ENCODE measurements at regions of chr7 and their contacts with region 1.

Region 1: DNA sequence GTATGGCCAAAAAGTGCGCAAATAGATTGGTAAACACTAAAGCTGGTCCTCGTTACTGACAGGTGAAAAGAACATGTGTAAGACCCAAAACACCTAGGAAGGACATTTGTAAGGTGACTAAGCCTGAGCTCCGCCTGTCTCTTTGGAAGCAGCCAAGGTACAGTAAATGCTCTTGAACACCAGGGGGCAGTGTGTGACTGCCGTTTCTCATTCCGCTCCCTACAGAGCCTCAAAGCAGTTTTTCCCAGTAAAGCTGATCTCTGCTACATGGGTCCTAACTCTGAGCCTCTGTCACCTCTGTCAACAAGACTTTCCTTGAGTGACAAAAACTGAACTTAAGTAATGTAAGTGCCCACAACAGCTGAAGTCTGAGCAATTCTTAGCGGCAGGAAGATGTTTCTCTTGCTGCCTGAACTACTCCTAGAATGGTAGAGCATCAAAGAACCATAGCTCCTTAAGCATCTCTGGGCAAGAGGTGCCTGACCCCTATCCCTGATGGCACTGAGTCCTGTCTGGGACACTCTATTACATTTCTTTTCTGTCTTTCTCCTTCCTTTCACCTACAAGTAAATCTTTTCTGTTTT is 238.0 kb upstream of the INHBA start:
- H3K4me3 ChIP-seq: no peak overlapping the region
- H3K27ac ChIP-seq: no peak overlapping the region
- H3K4me1 ChIP-seq: no peaks in the 10 kb centered on the region
- CTCF ChIP-seq: peak; percentile 43

Region 2: DNA sequence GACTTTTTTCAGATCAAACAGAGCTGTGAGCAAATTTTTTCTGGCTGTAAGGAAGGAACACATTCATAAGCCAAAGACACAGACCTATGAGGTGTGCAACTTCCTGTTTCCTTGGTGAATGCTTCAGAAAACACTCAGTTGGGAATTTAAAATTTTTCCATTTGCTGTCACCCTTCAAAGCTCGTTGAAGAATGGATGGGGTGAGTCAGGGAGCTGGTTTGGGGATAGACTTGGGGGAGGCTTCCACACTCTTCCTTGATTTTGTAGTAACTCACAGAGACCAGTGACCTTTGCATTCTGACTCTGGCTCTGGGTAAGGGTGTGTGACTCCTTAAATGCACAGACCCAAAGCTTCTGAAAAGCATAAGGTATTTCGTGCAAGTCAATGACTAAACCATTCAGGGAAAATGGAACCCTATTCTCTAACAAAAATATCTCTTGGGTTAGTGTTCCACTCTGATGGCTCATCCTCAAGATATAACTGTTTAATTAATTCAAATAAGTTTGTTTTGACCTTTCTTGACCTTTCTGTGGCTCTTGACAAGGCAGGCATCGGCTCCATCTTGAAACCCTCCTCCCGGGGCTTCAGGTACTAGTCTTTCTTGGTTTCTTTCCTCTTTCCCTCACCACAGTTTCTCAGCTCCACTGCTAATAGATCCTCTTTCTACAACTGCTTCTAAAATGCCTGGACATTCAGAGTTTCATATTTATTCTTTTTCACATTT is 10.2 kb before region 1 on chr7:
- CTCF ChIA-PET with region 1: interaction called, 16 read pairs
- POLR2A ChIA-PET with region 1: no interaction called
- H3K4me3 ChIP-seq: no peak overlapping the region
- H3K27ac ChIP-seq: no peak overlapping the region
- H3K4me1 ChIP-seq: no peaks in the 10 kb centered on the region
- CTCF ChIP-seq: no peak

Region 3: GRCh38 chr7:41977151-41977651 is 36.3 kb after region 1 on chr7:
- CTCF ChIA-PET with region 1: interaction called, 117 read pairs
- POLR2A ChIA-PET with region 1: no interaction called
- H3K4me3 ChIP-seq: no peak overlapping the region
- H3K27ac ChIP-seq: no peak overlapping the region
- H3K4me1 ChIP-seq: no peaks in the 10 kb centered on the region
- CTCF ChIP-seq: no peak

Region 4: GRCh38 chr7:42831718-42832431 is 891.0 kb after region 1 on chr7:
- CTCF ChIA-PET with region 1: interaction called, 19 read pairs
- POLR2A ChIA-PET with region 1: no interaction called
- H3K4me3 ChIP-seq: no peak overlapping the region
- H3K27ac ChIP-seq: no peak overlapping the region
- H3K4me1 ChIP-seq: no peaks in the 10 kb centered on the region; the same call in 1 of the 2 replicates
- CTCF ChIP-seq: peak; percentile 58

Region 5: DNA sequence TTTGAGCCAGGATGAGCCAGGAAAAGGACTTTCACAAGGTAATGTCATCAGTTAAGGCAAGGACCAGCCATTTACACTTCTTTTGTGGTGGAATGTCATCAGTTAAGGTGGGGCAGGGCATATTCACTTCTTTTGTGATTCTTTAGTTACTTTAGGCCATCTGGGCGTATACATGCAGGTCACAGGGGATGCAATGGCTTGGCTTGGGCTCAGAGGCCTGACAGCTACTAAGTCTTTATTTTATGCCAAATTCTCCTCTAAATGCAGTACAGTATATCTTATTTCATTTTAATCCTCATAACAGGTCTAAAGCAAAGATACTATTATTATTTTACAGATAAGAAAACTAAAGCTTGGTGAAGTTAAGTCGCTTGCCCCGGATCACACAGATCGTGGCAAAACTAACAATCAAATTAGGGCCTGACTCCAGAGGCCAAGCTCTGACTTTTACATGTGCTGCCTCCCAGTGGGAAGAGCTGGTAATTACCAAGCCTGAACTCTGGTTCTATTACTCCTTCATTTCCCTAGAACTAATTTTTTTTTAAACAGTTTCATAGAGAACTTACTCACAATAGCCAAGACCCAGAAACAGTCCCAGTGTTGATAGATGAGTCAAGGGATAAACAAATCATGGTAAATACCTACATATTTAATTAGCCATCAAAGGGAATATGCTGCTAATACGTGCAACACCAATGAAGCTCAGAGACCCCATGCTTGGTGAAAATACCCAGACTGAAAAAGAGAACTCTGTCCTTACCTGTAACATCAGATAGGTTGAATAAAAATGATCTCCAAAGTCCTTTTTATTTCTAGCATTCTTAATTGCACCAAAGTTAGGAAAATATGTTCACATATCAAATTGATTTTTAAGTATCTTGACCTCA is 935.6 kb after region 1 on chr7:
- CTCF ChIA-PET with region 1: interaction called, 52 read pairs
- POLR2A ChIA-PET with region 1: no interaction called
- H3K4me3 ChIP-seq: no peak overlapping the region
- H3K27ac ChIP-seq: no peak overlapping the region
- H3K4me1 ChIP-seq: no peaks in the 10 kb centered on the region
- CTCF ChIP-seq: no peak

Region 6: DNA sequence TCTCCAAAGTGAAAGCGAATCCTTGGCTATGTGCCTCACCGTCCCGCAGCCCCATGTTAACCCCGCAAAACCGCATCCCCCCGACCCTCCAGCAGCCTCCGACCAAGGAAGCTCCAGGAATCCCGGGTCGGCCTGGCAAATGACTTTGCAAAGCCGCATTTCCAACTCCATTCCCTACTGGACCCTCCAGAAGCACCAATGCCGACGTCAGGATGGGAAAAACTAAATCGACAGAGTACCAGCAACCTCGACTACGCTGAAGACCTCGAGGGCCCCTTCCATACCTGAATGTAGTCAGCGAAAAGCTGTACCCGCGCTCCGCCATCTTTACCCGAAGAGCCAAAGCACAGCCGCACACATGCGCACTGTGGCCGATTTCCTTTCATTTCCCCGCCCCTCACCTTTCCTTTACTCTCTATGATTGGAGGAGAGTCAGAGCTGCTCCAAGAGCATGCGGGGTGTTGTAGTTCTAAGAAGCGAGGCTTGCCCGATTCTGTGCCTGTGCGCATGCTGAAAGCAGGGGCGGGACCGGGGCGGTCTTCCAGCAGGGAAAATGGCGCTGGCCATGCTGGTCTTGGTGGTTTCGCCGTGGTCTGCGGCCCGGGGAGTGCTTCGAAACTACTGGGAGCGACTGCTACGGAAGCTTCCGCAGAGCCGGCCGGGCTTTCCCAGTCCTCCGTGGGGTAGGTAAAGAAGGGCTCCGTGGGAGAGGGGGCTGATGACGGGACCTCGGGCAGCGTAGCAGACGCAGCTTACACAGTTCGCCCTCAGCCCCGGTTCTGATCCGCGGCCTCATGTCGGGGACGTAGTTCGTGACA is 991.2 kb after region 1 on chr7 and contains the starts of genes MRPL32 and PSMA2:
- CTCF ChIA-PET with region 1: interaction called, 11 read pairs
- POLR2A ChIA-PET with region 1: no interaction called
- H3K4me3 ChIP-seq: peak within 1 kb of the TSS; percentile 94
- H3K27ac ChIP-seq: peak within 1 kb of the TSS; percentile 62; the same call in 1 of the 2 replicates
- H3K4me1 ChIP-seq: no peaks in the 10 kb centered on the region
- CTCF ChIP-seq: no peak